Calu3 (cell line): ENCODE measurements at regions of chr1 and their contacts with region 1.

Region 1: GRCh38 chr1:197783510-197783948 is 8.2 kb upstream of the DENND1B start:
- DNase-seq: peak; percentile 30
- H3K4me3 Mint-ChIP-seq: no peak overlapping the region
- H3K27ac Mint-ChIP-seq: peak overlapping the region; percentile 86
- H3K4me1 Mint-ChIP-seq: peaks cover 37% of the 10 kb centered on the region
- H3K27me3 Mint-ChIP-seq: no peaks in the 10 kb centered on the region
- CTCF ChIP-seq: no peak

Region 2: DNA sequence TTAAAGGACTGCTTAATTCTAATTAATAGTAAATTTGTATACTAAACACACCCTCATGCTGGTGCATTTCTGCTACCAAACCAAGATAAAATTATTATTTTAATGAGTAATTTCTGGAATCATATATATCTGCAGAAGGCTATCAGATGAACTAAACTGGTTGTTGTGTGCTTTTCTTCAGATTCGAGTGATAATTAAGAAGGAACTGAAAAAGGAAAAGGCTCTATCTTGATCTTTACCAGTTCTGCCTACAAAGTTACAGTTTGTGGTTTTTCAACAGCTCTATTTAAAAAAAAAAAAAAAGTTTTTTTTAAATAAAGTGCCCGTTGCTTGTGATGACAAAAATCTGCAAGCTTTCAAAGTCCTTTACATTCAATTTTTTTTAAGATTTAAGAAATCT is 21.9 kb before region 1 on chr1:
- CTCF ChIA-PET with region 1: no interaction called
- intact Hi-C with region 1: no loop called
- DNase-seq: no peak
- H3K4me3 Mint-ChIP-seq: no peak overlapping the region
- H3K27ac Mint-ChIP-seq: no peak overlapping the region
- H3K4me1 Mint-ChIP-seq: peaks cover 8% of the 10 kb centered on the region
- H3K27me3 Mint-ChIP-seq: no peaks in the 10 kb centered on the region
- CTCF ChIP-seq: no peak

Region 3: GRCh38 chr1:197862671-197863070 is 79.1 kb after region 1 on chr1:
- CTCF ChIA-PET with region 1: no interaction called
- intact Hi-C with region 1: loop called (anchors 5 kb)
- DNase-seq: no peak
- H3K4me3 Mint-ChIP-seq: peak overlapping the region; percentile 26
- H3K27ac Mint-ChIP-seq: peak overlapping the region; percentile 64
- H3K4me1 Mint-ChIP-seq: peaks cover 22% of the 10 kb centered on the region
- H3K27me3 Mint-ChIP-seq: no peaks in the 10 kb centered on the region
- CTCF ChIP-seq: no peak